Left ventricle myocardium superior (tissue), 1 donor: ENCODE measurements at regions of chr1 and their contacts with region 1.

Region 1: GRCh38 chr1:53959664-53960250 is 13.6 kb downstream of the LRRC42 start:
- DNase-seq: no peak
- ATAC-seq: no peak

Region 2: DNA sequence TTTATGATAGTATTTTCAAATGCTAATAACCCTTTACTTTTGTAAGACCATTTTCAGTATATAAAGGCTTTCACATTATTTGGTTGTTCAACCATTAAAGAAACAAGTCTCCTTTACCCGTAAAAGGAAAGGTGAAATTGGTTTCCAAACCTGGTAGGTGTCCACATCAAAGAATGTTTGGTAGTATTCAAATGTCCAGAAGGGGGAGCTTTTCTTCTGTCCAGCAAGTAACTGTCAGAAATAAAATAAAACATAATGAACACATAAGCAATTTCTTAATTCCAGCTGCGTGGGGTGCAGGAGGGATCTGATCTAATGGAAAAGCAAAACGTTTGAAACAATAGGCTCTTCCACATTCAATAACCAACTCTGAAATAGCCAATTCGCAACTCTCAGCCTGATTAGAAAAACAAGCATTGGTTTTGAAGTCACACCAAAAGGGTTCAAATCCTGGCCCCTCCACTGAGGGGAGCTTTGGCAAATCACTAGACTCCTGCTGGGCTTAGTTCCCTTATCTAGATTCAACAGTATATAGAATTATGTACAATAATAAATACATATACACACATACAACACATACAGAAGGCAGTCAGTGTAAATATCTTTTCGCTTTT is 81.2 kb before region 1 on chr1:
- intact Hi-C with region 1: loop called (anchors 5 kb)
- DNase-seq: no peak
- ATAC-seq: no peak